HepG2 (cell line): ENCODE measurements at regions of chr1 and their contacts with region 1.

Region 1: GRCh38 chr1:180521474-180522207 is 19.3 kb upstream of the ACBD6 start:
- DNase-seq: peak; percentile 86
- ATAC-seq: peak; percentile 83
- H3K4me3 ChIP-seq: peak overlapping the region in 2 of 3 experiments; percentile 34 to 45; a peak in 3 of 6 replicates
- H3K27ac ChIP-seq: peak overlapping the region; percentile 29
- H3K4me1 ChIP-seq: peaks cover 47% of the 10 kb centered on the region
- H3K27me3 ChIP-seq: no peaks in the 10 kb centered on the region
- CTCF ChIP-seq: no peak
- EP300 ChIP-seq: peak in 1 of 2 experiments; percentile 57; a peak in 2 of 4 replicates
- POLR2A ChIP-seq: 0 out of 4 replicates have a peak, but pooled peaks of 1 of the 2 experiments have one; percentile 2
- RAD21 ChIP-seq: no peak

Region 2: GRCh38 chr1:180502360-180503273 is 19.0 kb before region 1 on chr1 and contains the start of gene ACBD6:
- CTCF ChIA-PET with region 1: no interaction called
- POLR2A ChIA-PET with region 1: interaction called, 23 read pairs
- in situ Hi-C with region 1: no loop called
- intact Hi-C with region 1: no loop called
- DNase-seq: peak; percentile 71
- ATAC-seq: peak; percentile 93
- H3K4me3 ChIP-seq: peak within 1 kb of the TSS; percentile 73 to 90 (median 73)
- H3K27ac ChIP-seq: peak within 1 kb of the TSS; percentile 93
- H3K4me1 ChIP-seq: peaks cover 47% of the 10 kb centered on the region
- H3K27me3 ChIP-seq: no peaks in the 10 kb centered on the region; a peak in 1 of 5 replicates
- CTCF ChIP-seq: no peak; the same call in 1 of the 2 replicates
- EP300 ChIP-seq: 0 out of 4 replicates have a peak, but pooled peaks of 1 of the 2 experiments have one; percentile 7
- POLR2A ChIP-seq: peak; percentile 73 to 83
- RAD21 ChIP-seq: peak; percentile 29; the same call in 1 of the 2 replicates
- total RNA-seq, gene ACBD6: 40.3 and 47.2 TPM in 2 replicates

Region 3: DNA sequence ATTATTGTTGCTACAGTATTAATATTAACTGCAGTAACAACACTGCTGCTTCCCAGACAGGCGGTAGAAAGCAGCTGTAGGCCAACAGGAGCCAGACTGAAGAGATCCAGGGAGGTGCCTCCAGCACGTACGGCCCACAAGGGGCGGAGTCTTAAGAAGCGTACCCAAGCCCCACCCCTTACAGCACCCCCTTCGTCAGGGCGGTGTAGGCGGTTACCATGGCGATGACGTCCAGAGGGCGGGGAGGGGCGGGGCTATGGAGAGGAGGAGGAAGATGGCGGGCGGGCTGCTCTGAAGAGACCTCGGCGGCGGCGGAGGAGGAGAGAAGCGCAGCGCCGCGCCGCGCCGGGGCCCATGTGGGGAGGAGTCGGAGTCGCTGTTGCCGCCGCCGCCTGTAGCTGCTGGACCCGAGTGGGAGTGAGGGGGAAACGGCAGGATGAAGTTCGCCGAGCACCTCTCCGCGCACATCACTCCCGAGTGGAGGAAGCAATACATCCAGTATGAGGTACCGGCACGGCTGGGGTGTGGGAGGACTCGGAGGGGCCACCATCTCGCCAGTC is 110.2 kb after region 1 on chr1 and contains the start of gene XPR1:
- CTCF ChIA-PET with region 1: no interaction called
- POLR2A ChIA-PET with region 1: no interaction called
- in situ Hi-C with region 1: no loop called
- intact Hi-C with region 1: no loop called
- DNase-seq: peak; percentile 96
- ATAC-seq: peak; percentile 98
- H3K4me3 ChIP-seq: peak within 1 kb of the TSS; percentile 93 to 99 (median 95)
- H3K27ac ChIP-seq: peak within 1 kb of the TSS; percentile 87
- H3K4me1 ChIP-seq: peaks cover 32% of the 10 kb centered on the region
- H3K27me3 ChIP-seq: no peaks in the 10 kb centered on the region
- CTCF ChIP-seq: 0 out of 2 replicates have a peak, but pooled peaks have one; percentile 26
- EP300 ChIP-seq: no peak
- POLR2A ChIP-seq: peak; percentile 64 to 71
- RAD21 ChIP-seq: peak; percentile 18; the same call in 1 of the 2 replicates
- total RNA-seq, gene XPR1: 23.6 and 24.2 TPM in 2 replicates